ENCODE measurements at regions of chr6 and their contacts with region 1.

Region 1: DNA sequence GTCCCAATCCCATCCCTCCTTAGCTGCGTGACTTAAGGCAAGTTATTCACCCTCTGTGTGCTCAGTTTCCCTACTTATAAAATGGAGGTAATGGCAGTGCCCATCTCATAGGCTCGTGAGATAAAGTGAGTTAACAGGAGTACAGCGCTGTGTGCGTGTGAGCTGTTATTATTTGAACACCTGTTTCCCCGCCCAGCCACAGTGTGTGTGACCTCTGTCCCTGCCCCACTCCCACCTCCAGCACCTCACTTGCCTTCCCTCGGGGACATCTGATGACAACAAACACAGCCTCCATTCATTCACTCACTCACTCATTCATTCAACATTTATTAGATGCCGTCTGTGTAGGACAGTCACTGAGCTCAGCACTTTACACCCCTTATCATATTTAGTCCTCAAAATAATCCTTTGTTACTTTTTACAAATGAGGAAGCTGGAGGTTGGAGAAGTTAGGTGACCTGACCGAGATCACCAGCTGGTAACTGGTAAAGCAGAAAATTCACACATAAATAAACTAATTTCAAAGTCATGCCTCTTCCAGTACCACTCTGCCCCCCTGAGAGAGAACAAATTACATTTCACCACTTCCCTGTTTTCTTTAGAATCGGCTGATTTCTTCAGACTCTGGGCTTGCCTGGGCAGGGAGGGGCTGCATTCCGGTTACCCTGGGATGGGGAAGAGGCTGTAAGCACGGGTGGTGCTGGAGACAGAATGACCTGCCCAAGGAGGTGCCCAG is 58.6 kb downstream of the CPNE5 start:
- DNase-seq: no peak
- ATAC-seq: no peak
- H3K4me3 Mint-ChIP-seq: no peak overlapping the region
- H3K27ac Mint-ChIP-seq: no peak overlapping the region
- H3K4me1 Mint-ChIP-seq: no peaks in the 10 kb centered on the region
- H3K27me3 Mint-ChIP-seq: no peaks in the 10 kb centered on the region

Region 2: DNA sequence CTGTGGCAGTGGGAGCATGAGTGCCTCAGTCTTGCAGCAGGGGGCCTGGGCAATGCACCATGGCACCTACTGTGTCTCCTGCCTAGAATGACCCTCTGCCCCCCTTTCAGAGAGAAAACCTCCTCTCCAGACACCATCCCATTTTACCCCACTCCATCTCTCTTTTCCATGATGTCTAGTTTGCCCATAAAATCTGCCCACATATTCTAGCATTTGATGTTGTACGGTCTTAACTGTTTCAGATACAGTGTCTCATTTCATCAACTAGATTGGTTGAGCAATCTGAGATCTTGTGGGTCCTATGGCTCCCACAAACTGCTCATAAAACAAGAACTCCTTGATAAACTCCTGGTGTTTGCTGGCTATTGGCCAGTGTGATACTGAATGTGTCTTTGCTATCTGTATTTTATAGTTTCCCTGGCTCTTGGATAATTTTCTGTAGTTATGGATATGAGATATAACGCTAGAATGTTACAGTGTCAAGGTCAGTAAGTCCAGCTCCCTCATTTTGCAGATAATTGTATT is 502.6 kb before region 1 on chr6:
- CTCF ChIA-PET with region 1: no interaction called
- POLR2A ChIA-PET with region 1: no interaction called
- intact Hi-C with region 1: no loop called
- DNase-seq: no peak
- ATAC-seq: no peak
- H3K4me3 Mint-ChIP-seq: no peak overlapping the region
- H3K27ac Mint-ChIP-seq: no peak overlapping the region
- H3K4me1 Mint-ChIP-seq: no peaks in the 10 kb centered on the region
- H3K27me3 Mint-ChIP-seq: peaks cover 29% of the 10 kb centered on the region

Region 3: GRCh38 chr6:36451391-36451790 is 329.2 kb before region 1 on chr6:
- CTCF ChIA-PET with region 1: no interaction called
- POLR2A ChIA-PET with region 1: no interaction called
- intact Hi-C with region 1: no loop called
- DNase-seq: no peak
- ATAC-seq: no peak
- H3K4me3 Mint-ChIP-seq: no peak overlapping the region
- H3K27ac Mint-ChIP-seq: no peak overlapping the region
- H3K4me1 Mint-ChIP-seq: peaks cover 16% of the 10 kb centered on the region
- H3K27me3 Mint-ChIP-seq: no peaks in the 10 kb centered on the region

Region 4: GRCh38 chr6:36765594-36766398 is 14.8 kb before region 1 on chr6:
- CTCF ChIA-PET with region 1: interaction called, 152 read pairs
- POLR2A ChIA-PET with region 1: interaction called, 6 read pairs
- intact Hi-C with region 1: loop called (anchors 1 kb)
- DNase-seq: peak; percentile 92
- ATAC-seq: peak; percentile 92
- H3K4me3 Mint-ChIP-seq: no peak overlapping the region
- H3K27ac Mint-ChIP-seq: no peak overlapping the region
- H3K4me1 Mint-ChIP-seq: peaks cover 26% of the 10 kb centered on the region
- H3K27me3 Mint-ChIP-seq: no peaks in the 10 kb centered on the region

Region 5: GRCh38 chr6:36793296-36793912 is 12.8 kb after region 1 on chr6:
- CTCF ChIA-PET with region 1: interaction called, 15 read pairs
- POLR2A ChIA-PET with region 1: no interaction called
- intact Hi-C with region 1: no loop called
- DNase-seq: no peak
- ATAC-seq: no peak
- H3K4me3 Mint-ChIP-seq: no peak overlapping the region
- H3K27ac Mint-ChIP-seq: no peak overlapping the region
- H3K4me1 Mint-ChIP-seq: peaks cover 6% of the 10 kb centered on the region
- H3K27me3 Mint-ChIP-seq: peaks cover 5% of the 10 kb centered on the region

Region 6: DNA sequence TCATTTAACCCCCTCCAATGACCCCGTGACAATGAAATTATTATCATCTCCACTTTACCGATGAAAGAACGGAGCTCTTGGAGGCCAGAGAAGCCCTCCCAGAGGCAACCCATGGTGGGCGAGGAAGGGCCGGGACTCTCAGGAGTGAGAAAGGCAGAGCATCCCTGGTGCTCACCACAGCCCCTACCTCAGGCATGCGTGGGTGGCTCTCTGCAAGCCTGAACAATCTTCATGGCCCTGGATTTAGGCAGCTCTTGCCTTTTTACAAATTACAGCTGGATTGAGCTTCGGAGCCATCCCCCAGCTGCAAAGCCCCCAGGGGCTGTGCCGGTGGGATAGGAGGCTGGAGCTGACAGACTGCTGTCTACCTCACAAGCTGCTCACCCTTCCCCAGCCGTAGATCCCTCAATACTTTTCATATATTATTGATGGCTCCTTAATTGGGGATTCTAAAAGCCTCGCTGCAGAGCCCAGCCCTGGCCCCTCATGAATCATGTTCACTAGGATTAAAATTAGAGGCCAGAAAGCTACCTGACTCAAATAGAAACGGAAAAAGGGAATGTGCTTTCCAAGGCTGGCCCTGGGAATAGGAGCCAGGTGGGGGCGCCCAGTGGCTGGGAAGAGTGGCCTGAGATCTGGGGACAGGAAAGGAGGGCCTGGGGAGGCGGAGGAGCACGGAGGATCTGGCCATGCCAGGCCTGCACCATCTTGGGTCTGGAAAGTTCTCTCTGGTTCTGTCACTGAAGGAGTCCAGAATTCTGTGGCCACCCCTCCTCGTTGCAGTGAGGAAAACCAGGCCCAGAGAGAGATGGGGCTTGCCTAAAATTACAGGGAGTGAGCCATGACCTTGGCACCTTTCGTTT is 29.6 kb after region 1 on chr6:
- CTCF ChIA-PET with region 1: interaction called, 10 read pairs
- POLR2A ChIA-PET with region 1: no interaction called
- intact Hi-C with region 1: no loop called
- DNase-seq: no peak
- ATAC-seq: no peak
- H3K4me3 Mint-ChIP-seq: no peak overlapping the region
- H3K27ac Mint-ChIP-seq: no peak overlapping the region
- H3K4me1 Mint-ChIP-seq: no peaks in the 10 kb centered on the region
- H3K27me3 Mint-ChIP-seq: no peaks in the 10 kb centered on the region

Region 7: GRCh38 chr6:37141281-37142049 is 360.9 kb after region 1 on chr6:
- CTCF ChIA-PET with region 1: no interaction called
- POLR2A ChIA-PET with region 1: no interaction called
- intact Hi-C with region 1: no loop called
- DNase-seq: peak; percentile 37
- ATAC-seq: peak; percentile 38
- H3K4me3 Mint-ChIP-seq: no peak overlapping the region
- H3K27ac Mint-ChIP-seq: peak overlapping the region; percentile 73
- H3K4me1 Mint-ChIP-seq: peaks cover 41% of the 10 kb centered on the region
- H3K27me3 Mint-ChIP-seq: no peaks in the 10 kb centered on the region